ENCODE measurements at regions of chr16 and their contacts with region 1.

Region 1: GRCh38 chr16:49855280-49855821 is 561 bp downstream of the ZNF423 start:
- DNase-seq: peak; percentile 82 to 95
- H3K4me3 ChIP-seq: peak overlapping the region; percentile 74 to 86
- H3K27ac ChIP-seq: peak overlapping the region; percentile 86 to 89
- H3K4me1 ChIP-seq: peaks cover 0 to 47% (median 34%) of the 10 kb centered on the region in 4 donors
- H3K27me3 ChIP-seq: no peaks in the 10 kb centered on the region
- CTCF ChIP-seq: no peak

Region 2: DNA sequence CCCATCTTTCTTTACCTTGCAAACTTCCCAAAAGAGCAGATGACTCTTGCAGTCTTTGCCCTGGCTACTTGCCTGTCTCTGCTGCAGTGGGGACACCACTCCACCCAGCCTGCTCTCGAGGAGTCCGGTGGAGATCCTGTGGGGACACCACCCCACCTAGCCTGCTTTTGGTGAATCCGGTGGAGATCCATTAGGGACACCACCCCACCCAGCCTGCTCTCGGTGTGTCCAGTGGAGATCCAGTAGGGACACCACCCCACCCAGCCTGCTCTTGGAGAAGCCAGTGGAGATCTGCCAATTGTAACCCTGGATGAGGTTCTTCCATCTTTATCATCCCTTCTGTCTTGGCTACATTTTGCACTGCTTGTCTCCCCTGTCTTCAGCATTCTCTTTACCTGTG is 427.6 kb before region 1 on chr16:
- intact Hi-C with region 1: no loop called
- DNase-seq: peak in 1 of 2 donors; percentile 39
- H3K4me3 ChIP-seq: no peak overlapping the region
- H3K27ac ChIP-seq: no peak overlapping the region
- H3K4me1 ChIP-seq: no peaks in the 10 kb centered on the region
- H3K27me3 ChIP-seq: no peaks in the 10 kb centered on the region
- CTCF ChIP-seq: no peak

Region 3: DNA sequence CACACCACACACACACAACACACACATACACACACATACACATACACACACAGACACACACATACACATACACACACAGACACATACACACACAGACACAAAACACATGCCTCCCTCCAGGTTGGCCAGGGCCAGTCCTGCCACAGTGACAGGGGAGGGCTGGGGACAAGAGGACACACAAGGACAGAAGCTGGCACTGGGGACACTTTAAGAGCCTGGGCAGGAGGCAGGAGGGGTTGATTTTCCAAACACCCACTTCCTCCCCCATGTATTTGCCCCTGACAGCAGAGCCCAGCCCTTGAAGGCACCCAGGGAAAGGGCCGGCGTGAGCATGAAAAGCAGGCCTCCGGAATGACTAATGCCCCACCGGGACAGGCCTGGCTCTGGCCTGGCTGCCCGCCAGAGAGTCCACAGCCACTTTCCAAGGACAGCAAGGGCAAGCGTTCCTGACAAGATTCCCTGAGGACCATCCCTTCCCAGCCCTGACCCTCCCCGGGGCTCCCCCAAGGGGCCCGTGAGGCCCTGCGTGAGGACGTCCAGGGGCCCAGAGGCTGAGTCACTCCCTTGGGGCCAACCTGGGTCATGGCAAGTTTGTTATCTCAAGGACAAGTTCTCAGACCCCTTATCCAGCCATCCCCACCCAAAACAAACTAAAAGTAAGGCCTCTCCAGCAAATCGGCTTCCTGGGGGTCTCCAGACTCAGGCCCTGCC is 235.0 kb before region 1 on chr16:
- intact Hi-C with region 1: loop called (anchors 5 kb)
- DNase-seq: peak; percentile 85 to 96
- H3K4me3 ChIP-seq: no peak overlapping the region
- H3K27ac ChIP-seq: peak overlapping the region; percentile 73 to 90
- H3K4me1 ChIP-seq: peaks cover 4 to 46% (median 30%) of the 10 kb centered on the region in 4 donors
- H3K27me3 ChIP-seq: no peaks in the 10 kb centered on the region
- CTCF ChIP-seq: no peak

Region 4: GRCh38 chr16:49776085-49776595 is 79.2 kb before region 1 on chr16:
- intact Hi-C with region 1: no loop called
- DNase-seq: peak in 1 of 2 donors; percentile 22
- H3K4me3 ChIP-seq: no peak overlapping the region
- H3K27ac ChIP-seq: no peak overlapping the region
- H3K4me1 ChIP-seq: peaks cover 0 to 19% (median 11%) of the 10 kb centered on the region in 4 donors
- H3K27me3 ChIP-seq: no peaks in the 10 kb centered on the region
- CTCF ChIP-seq: no peak

Region 5: DNA sequence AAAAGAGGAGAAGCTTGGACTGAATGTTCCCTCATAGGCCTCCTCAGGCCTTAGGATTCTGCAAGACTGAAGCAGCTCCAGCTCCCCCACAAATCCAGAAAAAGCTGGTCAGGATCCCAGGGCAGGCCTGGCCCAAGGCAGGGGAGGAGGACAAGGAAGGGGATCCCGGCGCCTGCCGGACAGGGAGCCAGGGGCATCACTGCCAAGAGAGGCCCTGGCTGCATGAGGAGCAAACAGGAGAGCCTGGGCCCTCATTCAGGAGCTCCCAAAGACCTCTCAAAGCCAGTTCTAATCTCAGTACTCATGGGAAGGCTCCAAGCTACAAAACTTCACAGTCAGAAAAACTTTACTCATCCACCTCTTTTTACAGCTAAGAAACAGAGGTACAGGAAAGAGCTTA is 66.8 kb before region 1 on chr16:
- intact Hi-C with region 1: loop called (anchors 5 kb)
- DNase-seq: peak in 1 of 2 donors; percentile 81
- H3K4me3 ChIP-seq: no peak overlapping the region
- H3K27ac ChIP-seq: peak overlapping the region; percentile 66 to 74
- H3K4me1 ChIP-seq: peaks cover 0 to 41% (median 28%) of the 10 kb centered on the region in 4 donors
- H3K27me3 ChIP-seq: no peaks in the 10 kb centered on the region
- CTCF ChIP-seq: no peak

Region 6: DNA sequence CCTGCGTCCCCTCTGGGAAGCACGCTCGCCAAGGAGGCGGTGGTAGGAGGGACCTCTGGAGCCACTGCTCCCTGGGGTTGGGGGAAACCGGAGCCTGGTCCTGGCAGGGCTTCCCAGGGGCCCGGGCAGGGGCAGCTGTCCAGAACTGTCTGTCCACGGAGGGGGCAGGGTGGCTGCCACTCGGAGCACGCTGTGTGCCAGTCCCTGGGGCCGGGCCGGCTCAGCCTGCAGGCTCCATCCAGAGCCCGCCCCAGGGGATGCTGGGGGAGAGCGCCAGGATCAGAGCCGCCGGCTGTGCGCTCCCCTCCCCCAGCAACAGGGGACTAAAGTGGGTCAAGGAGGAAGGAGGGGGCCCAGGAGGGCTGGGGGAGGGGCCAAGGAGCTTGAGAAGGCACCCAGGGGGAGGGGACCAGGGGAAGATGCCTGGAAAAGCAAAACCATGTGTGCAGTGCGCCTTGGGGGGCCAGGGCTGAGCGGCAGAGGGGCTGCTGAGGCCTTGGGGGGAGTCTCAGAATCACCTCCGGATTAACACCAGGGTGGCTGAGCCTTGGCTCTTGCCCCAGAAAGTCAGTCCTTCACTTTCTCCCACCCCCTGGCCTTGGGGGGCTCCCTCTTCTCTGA is 20.7 kb before region 1 on chr16:
- intact Hi-C with region 1: loop called (anchors 2 kb)
- DNase-seq: peak; percentile 83 to 97
- H3K4me3 ChIP-seq: peak overlapping the region in 1 of 2 donors; percentile 6
- H3K27ac ChIP-seq: peak overlapping the region; percentile 80 to 83
- H3K4me1 ChIP-seq: peaks cover 13 to 87% (median 64%) of the 10 kb centered on the region in 4 donors
- H3K27me3 ChIP-seq: peaks cover 0 to 6% of the 10 kb centered on the region in 2 donors
- CTCF ChIP-seq: no peak

Region 7: DNA sequence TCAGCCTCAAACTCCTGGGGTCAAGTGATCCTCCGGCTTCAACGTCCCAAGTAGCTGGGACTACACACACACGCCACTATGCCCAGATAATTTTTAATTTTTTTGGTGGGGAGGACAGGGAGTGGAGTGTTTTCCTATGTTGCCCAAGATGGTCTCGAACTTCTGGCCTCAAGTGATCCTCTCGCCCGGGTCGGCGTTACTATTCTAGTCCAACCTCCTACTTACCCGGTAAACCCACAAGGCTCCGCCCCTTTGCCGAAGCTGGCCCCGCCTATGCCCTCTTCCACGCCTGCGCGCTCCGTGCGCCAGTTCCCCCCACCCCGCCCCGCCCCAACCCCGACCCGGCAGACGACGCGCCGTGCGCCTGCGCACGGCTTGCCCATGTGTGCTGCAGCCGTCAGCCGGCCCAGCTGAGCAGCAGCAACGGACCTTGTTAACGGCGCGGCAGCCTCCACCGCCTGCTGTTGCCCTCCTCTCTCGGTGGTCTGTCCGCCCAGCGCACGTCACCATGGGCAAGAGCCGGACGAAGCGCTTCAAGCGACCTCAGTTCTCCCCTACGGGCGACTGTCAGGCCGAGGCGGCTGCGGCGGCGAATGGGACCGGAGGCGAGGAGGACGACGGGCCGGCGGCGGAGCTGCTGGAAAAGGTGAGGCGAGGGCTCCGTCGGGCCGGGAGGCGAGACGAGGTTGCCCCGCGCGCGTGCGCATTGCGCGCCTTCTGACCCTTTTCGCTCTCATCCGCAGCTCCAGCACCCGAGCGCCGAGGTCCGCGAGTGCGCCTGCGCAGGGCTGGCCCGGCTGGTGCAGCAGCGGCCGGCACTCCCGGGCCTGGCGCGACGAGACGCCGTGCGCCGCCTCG is 210.5 kb after region 1 on chr16 and contains the start of gene HEATR3:
- intact Hi-C with region 1: no loop called
- DNase-seq: peak; percentile 83 to 95
- H3K4me3 ChIP-seq: peak within 1 kb of the TSS; percentile 84 to 94
- H3K27ac ChIP-seq: peak within 1 kb of the TSS; percentile 78 to 86
- H3K4me1 ChIP-seq: peaks cover 0 to 24% (median 12%) of the 10 kb centered on the region in 4 donors
- H3K27me3 ChIP-seq: no peaks in the 10 kb centered on the region
- CTCF ChIP-seq: no peak

Measured in tibial artery (tissue), 4 donors.